Vagina (tissue), 2 donors: ENCODE measurements at regions of chr6 and their contacts with region 1.

Region 1: DNA sequence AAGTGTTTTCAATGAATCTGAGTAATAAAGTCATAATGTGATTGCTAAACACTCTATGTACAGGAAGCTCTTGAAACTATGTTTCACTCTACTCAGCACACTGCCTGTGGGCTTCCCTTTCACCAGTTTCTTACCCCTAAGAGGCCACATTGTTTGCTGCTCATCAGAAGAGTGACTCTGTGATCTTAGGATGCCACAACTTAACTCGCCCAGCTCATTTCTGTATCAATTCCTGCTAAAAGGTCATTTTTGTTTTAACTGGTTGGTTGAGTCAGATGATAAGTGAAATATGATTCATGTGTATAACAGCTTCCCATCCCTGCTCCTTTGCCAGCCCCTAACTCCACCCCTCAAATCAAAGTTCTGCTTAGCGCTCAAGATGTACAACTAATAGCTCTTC is 9.8 kb upstream of the NDUFAF4 start:
- DNase-seq: no peak
- H3K4me3 ChIP-seq: no peak overlapping the region
- H3K27ac ChIP-seq: no peak overlapping the region
- H3K4me1 ChIP-seq: no peaks in the 10 kb centered on the region
- H3K27me3 ChIP-seq: no peaks in the 10 kb centered on the region
- CTCF ChIP-seq: no peak
- POLR2A ChIP-seq: no peak

Region 2: GRCh38 chr6:96645106-96645505 is 262.4 kb before region 1 on chr6:
- intact Hi-C with region 1: no loop called
- DNase-seq: no peak
- H3K4me3 ChIP-seq: no peak overlapping the region
- H3K27ac ChIP-seq: no peak overlapping the region
- H3K4me1 ChIP-seq: no peaks in the 10 kb centered on the region
- H3K27me3 ChIP-seq: no peaks in the 10 kb centered on the region
- CTCF ChIP-seq: no peak
- POLR2A ChIP-seq: no peak

Region 3: DNA sequence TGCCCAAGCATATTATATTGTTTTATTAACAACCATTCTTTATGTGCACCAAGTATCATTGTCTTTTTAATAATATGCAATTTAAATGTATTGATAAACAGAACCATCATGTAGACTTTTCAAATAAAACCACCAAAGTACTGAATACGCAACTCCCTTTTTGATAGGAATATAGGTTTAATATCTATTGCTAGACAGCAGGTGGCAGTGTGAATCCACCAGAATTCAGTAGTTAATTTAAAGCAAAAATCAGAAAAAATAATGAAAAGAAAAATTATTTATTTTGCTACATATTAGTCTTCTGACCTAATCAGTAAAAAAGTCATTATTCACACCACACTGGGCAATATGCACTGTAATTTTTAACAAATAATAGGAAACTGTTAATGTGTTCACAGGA is 160.7 kb after region 1 on chr6:
- intact Hi-C with region 1: loop called (anchors 10 kb)
- DNase-seq: no peak
- H3K4me3 ChIP-seq: no peak overlapping the region
- H3K27ac ChIP-seq: no peak overlapping the region
- H3K4me1 ChIP-seq: no peaks in the 10 kb centered on the region
- H3K27me3 ChIP-seq: no peaks in the 10 kb centered on the region
- CTCF ChIP-seq: peak in 1 of 3 experiments; percentile 39
- POLR2A ChIP-seq: no peak

Region 4: DNA sequence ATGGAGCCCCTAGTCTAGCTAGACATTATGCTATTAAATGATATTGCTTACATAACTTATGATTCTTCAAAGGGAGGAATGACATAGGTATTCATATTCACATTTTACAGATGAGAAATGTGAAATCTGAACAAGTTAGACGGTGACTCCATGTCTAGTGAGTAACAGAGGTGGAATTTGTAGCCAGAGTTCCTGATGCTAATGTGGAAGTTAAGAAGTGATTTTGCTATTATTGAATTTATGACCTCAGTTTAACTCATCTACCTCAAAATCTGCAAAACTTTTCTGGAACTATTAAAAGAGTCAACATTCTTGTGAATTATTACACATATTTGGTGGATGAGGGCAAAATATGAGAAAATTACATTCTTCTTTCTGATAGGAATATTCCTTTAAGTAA is 723.1 kb after region 1 on chr6:
- intact Hi-C with region 1: no loop called
- DNase-seq: no peak
- H3K4me3 ChIP-seq: no peak overlapping the region
- H3K27ac ChIP-seq: no peak overlapping the region
- H3K4me1 ChIP-seq: no peaks in the 10 kb centered on the region
- H3K27me3 ChIP-seq: no peaks in the 10 kb centered on the region
- CTCF ChIP-seq: no peak
- POLR2A ChIP-seq: no peak